MCF 10A (cell line): ENCODE measurements at regions of chr4 and their contacts with region 1.

Region 1: DNA sequence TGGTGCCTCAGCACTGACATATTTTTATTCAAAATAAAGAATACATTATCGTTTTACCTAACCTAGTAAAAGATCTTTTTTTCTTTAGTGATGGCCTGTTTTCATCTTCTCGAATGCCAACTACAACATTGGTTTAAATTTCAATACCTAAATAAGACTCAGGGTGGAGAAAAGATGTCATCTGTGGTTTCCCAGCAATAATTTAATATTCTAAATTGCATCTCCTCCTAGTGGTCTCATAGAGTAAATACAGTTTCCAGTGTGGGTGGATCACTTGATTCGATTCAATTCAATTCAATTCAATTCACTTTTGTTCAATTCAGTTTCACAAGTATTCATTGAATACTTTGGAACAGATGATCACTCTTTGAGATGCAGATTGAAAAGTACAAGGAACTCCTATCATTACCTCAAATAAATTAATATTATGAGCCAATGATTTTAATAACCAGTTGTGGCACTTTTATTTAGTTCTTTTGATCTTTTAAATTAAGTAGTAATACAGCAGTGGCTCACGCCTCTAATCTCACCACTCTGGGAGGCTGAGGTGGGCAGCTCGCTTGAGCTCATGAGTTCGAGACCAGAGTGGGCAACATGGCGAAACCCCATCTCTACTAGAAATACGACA is 427.2 kb downstream of the FAT4 start:
- DNase-seq: peak; percentile 50
- H3K4me3 Mint-ChIP-seq: no peak overlapping the region
- H3K27ac Mint-ChIP-seq: no peak overlapping the region
- H3K4me1 Mint-ChIP-seq: peaks cover 7% of the 10 kb centered on the region
- H3K27me3 Mint-ChIP-seq: no peaks in the 10 kb centered on the region
- CTCF ChIP-seq: peak; percentile 62

Region 2: GRCh38 chr4:124079174-124079780 is 1662.7 kb before region 1 on chr4:
- CTCF ChIA-PET with region 1: no interaction called
- POLR2A ChIA-PET with region 1: no interaction called
- intact Hi-C with region 1: no loop called
- DNase-seq: no peak
- H3K4me3 Mint-ChIP-seq: no peak overlapping the region
- H3K27ac Mint-ChIP-seq: no peak overlapping the region
- H3K4me1 Mint-ChIP-seq: no peaks in the 10 kb centered on the region
- H3K27me3 Mint-ChIP-seq: no peaks in the 10 kb centered on the region
- CTCF ChIP-seq: no peak

Region 3: DNA sequence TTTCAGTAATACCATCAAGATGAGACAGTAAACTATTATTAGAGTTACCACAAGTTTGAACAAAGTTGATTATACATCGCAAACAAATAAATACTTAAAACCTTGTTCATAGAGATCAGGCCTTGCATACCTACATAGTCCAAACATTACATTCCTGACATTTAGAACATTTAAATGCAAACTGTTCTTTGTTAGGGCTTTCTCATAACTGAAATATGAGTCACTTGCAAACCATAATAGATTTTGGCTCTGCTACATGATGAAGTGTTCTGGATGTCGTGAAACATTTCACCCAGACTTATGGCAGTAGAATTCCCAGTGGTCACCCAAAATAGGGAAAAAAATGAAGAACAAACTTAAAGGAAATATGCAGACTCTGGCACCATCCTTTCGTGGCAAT is 352.2 kb before region 1 on chr4:
- CTCF ChIA-PET with region 1: interaction called, 3 read pairs
- POLR2A ChIA-PET with region 1: no interaction called
- intact Hi-C with region 1: loop called (anchors 10 kb)
- DNase-seq: peak; percentile 76
- H3K4me3 Mint-ChIP-seq: peak overlapping the region; percentile 60
- H3K27ac Mint-ChIP-seq: peak overlapping the region; percentile 87
- H3K4me1 Mint-ChIP-seq: peaks cover 33% of the 10 kb centered on the region
- H3K27me3 Mint-ChIP-seq: no peaks in the 10 kb centered on the region
- CTCF ChIP-seq: no peak